ENCODE measurements at regions of chr6 and their contacts with region 1.

Region 1: DNA sequence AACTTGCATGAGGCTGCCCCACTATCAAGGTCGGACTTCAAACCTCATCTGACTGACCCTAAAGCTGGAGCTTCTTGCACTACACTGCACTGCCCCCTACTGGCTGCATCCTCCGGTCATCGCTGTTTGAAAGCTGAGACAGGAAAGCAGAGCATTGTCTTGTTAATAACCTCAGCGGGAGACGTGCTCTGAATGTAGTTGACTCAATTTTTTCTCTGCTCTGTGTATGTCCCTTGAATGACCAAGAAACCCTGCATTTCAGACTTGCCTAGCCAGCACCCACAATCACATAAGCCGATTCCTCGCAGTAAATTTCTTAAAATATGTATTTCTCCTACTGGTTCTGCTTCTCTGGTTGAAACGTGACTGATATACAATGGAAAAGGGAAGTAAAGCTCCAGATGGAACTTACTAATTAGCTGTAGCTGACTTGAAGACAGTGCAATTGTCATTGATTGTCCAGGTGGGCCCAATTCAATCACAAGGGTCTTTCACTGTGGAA is 27.8 kb downstream of the TCF21 start:
- DNase-seq: peak; percentile 97
- H3K4me3 ChIP-seq: no peak overlapping the region
- H3K27ac ChIP-seq: no peak overlapping the region
- H3K4me1 ChIP-seq: peaks cover 0 to 25% (median 15%) of the 10 kb centered on the region in 4 donors
- H3K27me3 ChIP-seq: no peaks in the 10 kb centered on the region
- CTCF ChIP-seq: peak; percentile 86 to 87 (median 86)
- EP300 ChIP-seq: no peak
- POLR2A ChIP-seq: no peak

Region 2: DNA sequence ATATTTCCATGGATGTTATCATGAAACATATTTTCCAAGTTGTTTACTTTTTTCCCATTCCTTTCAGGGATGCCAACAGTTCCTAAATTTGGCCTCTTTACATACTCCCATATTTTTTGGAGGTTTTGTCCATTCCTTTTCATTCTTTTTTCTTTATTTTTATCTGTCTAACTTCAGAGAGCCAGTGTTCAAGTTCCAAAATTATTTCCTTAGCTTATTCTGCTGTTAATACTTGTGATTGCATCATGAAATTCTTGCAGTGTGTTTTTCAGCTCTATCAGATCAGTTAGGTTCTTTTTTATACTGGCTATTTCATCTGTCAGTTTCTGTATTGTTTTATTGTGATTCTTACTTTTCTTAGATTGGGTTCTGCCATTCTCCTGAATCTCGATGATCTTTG is 117.7 kb before region 1 on chr6:
- intact Hi-C with region 1: no loop called
- DNase-seq: no peak
- H3K4me3 ChIP-seq: no peak overlapping the region
- H3K27ac ChIP-seq: no peak overlapping the region
- H3K4me1 ChIP-seq: no peaks in the 10 kb centered on the region
- H3K27me3 ChIP-seq: no peaks in the 10 kb centered on the region
- CTCF ChIP-seq: no peak
- EP300 ChIP-seq: no peak
- POLR2A ChIP-seq: no peak

Region 3: GRCh38 chr6:133837801-133838349 is 78.8 kb before region 1 on chr6:
- intact Hi-C with region 1: loop called (anchors 5 kb)
- DNase-seq: no peak
- H3K4me3 ChIP-seq: peak overlapping the region; percentile 50 to 59 (median 52)
- H3K27ac ChIP-seq: peak overlapping the region in 1 of 4 donors; percentile 48
- H3K4me1 ChIP-seq: peaks cover 0 to 10% (median 4%) of the 10 kb centered on the region in 4 donors
- H3K27me3 ChIP-seq: no peaks in the 10 kb centered on the region
- CTCF ChIP-seq: peak; percentile 56 to 81 (median 77)
- EP300 ChIP-seq: no peak
- POLR2A ChIP-seq: no peak

Region 4: DNA sequence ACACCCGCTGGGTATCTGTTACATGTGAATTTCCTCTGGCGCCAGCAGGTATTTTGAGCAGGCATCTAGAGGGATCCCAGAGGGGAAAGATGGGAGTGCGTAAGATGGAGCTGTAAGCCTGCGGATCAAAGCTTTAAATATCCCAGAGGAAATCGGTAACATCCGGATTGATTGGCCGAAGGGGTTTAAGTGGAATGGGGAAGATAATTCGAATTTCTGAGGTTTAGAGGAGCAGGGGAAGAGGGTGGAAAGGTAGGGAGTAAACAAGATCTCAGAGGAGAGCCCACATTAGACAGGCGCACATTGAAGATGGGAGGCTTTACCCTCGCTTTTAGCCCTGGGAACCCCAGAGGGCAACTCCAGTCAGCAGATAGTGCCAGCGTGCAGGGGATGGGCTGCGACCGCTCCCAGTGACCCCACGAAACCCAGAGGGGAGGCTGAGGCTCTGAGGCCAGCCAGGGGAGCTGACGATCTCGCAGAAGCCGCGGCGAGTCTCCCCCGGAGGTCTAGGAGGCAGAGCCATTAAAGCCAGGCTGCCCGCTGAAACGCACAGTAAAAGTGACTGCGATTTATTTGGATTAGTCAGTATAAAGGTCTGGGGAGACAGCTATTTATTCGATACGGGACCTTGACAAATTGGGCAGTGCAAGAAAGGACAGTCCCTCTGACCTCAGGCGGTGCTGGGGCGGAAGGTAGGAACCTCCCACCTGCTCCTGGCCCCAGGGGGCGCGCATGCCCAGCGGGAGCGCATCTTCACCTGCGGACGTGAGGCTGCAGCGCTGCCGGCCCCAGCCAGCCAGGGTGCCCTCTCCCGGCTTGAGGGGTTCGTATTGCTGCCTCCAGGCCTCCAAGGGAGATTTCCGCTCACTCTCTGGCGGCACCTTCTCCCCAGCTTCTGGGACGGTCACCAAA is 62.1 kb before region 1 on chr6:
- intact Hi-C with region 1: loop called (anchors 5 kb)
- DNase-seq: no peak
- H3K4me3 ChIP-seq: peak overlapping the region; percentile 30 to 52 (median 40)
- H3K27ac ChIP-seq: no peak overlapping the region
- H3K4me1 ChIP-seq: peaks cover 6 to 10% (median 8%) of the 10 kb centered on the region in 4 donors
- H3K27me3 ChIP-seq: peaks cover 0 to 12% (median 0%) of the 10 kb centered on the region in 4 donors
- CTCF ChIP-seq: peak; percentile 36 to 44 (median 43)
- EP300 ChIP-seq: no peak
- POLR2A ChIP-seq: no peak

Region 5: DNA sequence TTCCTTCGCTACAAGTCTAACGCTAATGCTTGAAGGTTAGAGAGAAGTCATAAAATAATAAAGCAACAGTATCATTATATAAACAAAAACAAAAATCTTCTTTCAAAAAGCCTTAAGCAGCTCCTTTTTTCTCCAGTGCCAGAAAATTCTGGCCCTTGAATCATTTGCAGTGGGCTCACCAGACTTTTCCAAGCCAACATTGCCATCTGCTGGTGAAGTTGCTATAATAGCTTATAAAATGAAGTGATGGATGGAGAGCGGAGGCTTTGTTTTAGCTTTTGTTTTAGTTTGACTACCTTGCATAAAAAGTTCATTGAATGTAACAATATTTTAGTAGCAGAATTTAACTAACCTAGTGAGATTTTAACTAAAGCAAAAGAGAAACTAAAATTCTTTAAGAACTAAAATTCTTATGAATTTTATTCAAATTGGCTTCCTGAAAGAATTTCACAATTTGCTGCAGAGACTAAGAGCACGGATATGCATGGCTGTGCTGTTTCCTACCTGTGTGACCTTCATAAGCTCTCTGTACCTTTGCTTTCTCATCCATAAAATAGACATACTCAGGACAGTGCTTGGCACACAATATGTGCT is 180.5 kb after region 1 on chr6:
- intact Hi-C with region 1: no loop called
- DNase-seq: peak; percentile 88
- H3K4me3 ChIP-seq: no peak overlapping the region
- H3K27ac ChIP-seq: no peak overlapping the region
- H3K4me1 ChIP-seq: no peaks in the 10 kb centered on the region
- H3K27me3 ChIP-seq: no peaks in the 10 kb centered on the region
- CTCF ChIP-seq: peak; percentile 61 to 69 (median 64)
- EP300 ChIP-seq: no peak
- POLR2A ChIP-seq: no peak

Region 6: GRCh38 chr6:134123666-134124208 is 207.0 kb after region 1 on chr6:
- intact Hi-C with region 1: no loop called
- DNase-seq: no peak
- H3K4me3 ChIP-seq: no peak overlapping the region
- H3K27ac ChIP-seq: no peak overlapping the region
- H3K4me1 ChIP-seq: peaks cover 0 to 9% (median 2%) of the 10 kb centered on the region in 4 donors
- H3K27me3 ChIP-seq: no peaks in the 10 kb centered on the region
- CTCF ChIP-seq: peak; percentile 68 to 83 (median 74)
- EP300 ChIP-seq: no peak
- POLR2A ChIP-seq: no peak